Naive thymus-derived CD4-positive, alpha-beta T cell (primary cell): ENCODE measurements at regions of chr1 and their contacts with region 1.

Region 1: GRCh38 chr1:226940029-226940805 is at the start of gene COQ8A:
- DNase-seq: peak in 8 of 9 donors; percentile 99 to 100 (median 100)
- ATAC-seq: peak; percentile 95
- H3K4me3 ChIP-seq: peak within 1 kb of the TSS; percentile 84
- H3K4me3 Mint-ChIP-seq: peak within 1 kb of the TSS; percentile 85 to 94 (median 92)
- H3K27ac ChIP-seq: peak within 1 kb of the TSS; percentile 87
- H3K27ac Mint-ChIP-seq: peak within 1 kb of the TSS; percentile 94 to 98 (median 97)
- H3K4me1 ChIP-seq: peaks cover 15 to 34% of the 10 kb centered on the region in 2 donors
- H3K4me1 Mint-ChIP-seq: peaks cover 43 to 67% (median 50%) of the 10 kb centered on the region in 7 donors
- H3K27me3 ChIP-seq: no peaks in the 10 kb centered on the region
- H3K27me3 Mint-ChIP-seq: no peaks in the 10 kb centered on the region
- total RNA-seq, gene COQ8A: 34.1 to 83.4 (median 67.8) TPM

Region 2: DNA sequence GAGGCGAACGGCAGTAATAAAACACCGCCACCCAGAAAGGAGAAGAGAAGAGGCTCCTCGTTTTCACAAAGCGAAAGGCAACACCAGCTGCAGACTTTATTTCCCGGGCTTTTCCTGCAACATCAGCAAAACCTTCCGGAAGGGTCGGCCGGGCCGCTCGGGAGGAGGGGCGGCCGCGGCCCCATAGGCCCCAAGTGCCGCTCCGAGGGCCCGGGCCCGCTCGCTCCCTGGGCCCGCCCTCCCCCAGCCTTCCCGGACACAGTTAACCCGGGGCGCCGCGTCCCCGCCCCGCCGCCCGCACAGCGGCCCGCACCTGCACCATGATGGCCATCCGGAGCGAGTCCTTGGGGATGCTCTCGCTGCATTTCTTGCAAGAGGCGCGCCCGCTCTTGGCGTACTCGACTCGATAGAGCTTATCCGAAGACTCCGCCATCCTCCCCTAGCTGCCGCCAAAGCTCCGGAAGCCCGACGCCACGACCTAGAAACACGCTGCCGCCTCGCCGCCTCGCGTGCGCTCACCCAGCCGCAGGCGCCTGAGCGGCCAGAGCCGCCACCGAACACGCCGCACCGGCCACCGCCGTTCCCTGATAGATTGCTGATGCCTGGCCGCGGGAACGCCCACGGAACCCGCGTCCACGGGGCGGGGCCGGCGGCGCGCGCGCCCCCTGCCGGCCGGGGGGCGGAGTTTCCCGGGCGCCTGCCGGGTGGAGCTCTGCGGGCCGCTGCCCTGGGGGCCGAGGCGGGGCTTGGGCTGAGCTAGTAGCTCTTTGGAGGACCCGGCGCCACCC is 532.5 kb before region 1 on chr1 and contains the start of gene PARP1:
- CTCF ChIA-PET with region 1: no interaction called
- POLR2A ChIA-PET with region 1: interaction called, 3 read pairs
- intact Hi-C with region 1: loop called (anchors 2 to 5 kb)
- DNase-seq: peak; percentile 83 to 93 (median 89)
- ATAC-seq: peak; percentile 94
- H3K4me3 ChIP-seq: peak within 1 kb of the TSS; percentile 82
- H3K4me3 Mint-ChIP-seq: peak within 1 kb of the TSS; percentile 89 to 99 (median 94)
- H3K27ac ChIP-seq: peak within 1 kb of the TSS; percentile 74
- H3K27ac Mint-ChIP-seq: peak within 1 kb of the TSS; percentile 68 to 96 (median 93)
- H3K4me1 ChIP-seq: peaks cover 23 to 30% of the 10 kb centered on the region in 2 donors
- H3K4me1 Mint-ChIP-seq: peaks cover 37 to 46% (median 40%) of the 10 kb centered on the region in 7 donors
- H3K27me3 ChIP-seq: no peaks in the 10 kb centered on the region
- H3K27me3 Mint-ChIP-seq: peaks cover 0 to 3% (median 0%) of the 10 kb centered on the region in 5 donors
- total RNA-seq, gene PARP1: 63.6 to 165 (median 89.3) TPM

Region 3: DNA sequence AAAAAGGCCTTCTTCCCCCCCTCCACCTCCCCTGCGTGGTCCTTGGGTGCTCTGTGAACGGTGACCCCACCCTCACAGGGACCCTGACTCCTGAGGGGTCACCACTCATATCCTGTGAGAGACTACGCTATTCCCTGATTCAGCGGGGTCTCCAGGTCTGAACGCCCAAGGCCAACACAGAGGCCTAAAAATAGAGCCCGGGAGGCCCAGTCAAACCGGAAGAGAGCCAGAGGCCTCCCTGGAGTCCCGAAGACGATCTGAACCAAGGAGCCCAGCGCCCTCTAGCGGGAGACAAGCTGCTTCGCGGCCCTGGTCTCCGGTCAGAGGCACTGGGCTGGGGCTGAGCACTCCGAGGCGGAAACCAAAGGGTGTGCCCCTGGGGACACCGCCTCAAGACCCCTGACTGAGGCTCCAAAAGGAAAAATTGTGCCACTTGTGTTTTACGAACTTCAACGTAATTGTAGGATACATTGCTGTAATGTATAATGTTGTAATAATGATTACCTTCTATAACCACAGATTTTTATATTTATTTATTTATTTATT is 112.2 kb before region 1 on chr1:
- CTCF ChIA-PET with region 1: interaction called, 3 read pairs
- POLR2A ChIA-PET with region 1: interaction called, 3 read pairs
- intact Hi-C with region 1: loop called in 1 of 2 experiments (anchors 1 kb)
- DNase-seq: peak; percentile 82 to 94 (median 91)
- ATAC-seq: peak; percentile 99
- H3K4me3 ChIP-seq: peak overlapping the region; percentile 34
- H3K4me3 Mint-ChIP-seq: peak overlapping the region; percentile 35 to 79 (median 66)
- H3K27ac ChIP-seq: peak overlapping the region; percentile 59
- H3K27ac Mint-ChIP-seq: peak overlapping the region; percentile 80 to 95 (median 87)
- H3K4me1 ChIP-seq: peaks cover 9 to 11% of the 10 kb centered on the region in 2 donors
- H3K4me1 Mint-ChIP-seq: peaks cover 24 to 54% (median 45%) of the 10 kb centered on the region in 7 donors
- H3K27me3 ChIP-seq: no peaks in the 10 kb centered on the region
- H3K27me3 Mint-ChIP-seq: peaks cover 0 to 4% (median 0%) of the 10 kb centered on the region in 5 donors

Region 4: GRCh38 chr1:226912587-226913176 is 27.5 kb before region 1 on chr1:
- CTCF ChIA-PET with region 1: interaction called, 7 read pairs
- POLR2A ChIA-PET with region 1: interaction called, 8 read pairs
- intact Hi-C with region 1: loop called (anchors 1 to 2 kb)
- DNase-seq: peak in 7 of 9 donors; percentile 16 to 43 (median 29)
- ATAC-seq: peak; percentile 67
- H3K4me3 ChIP-seq: no peak overlapping the region
- H3K4me3 Mint-ChIP-seq: peak overlapping the region in 1 of 10 donors; percentile 10
- H3K27ac ChIP-seq: no peak overlapping the region
- H3K27ac Mint-ChIP-seq: peak overlapping the region in 2 of 9 donors; percentile 28 to 64
- H3K4me1 ChIP-seq: no peaks in the 10 kb centered on the region
- H3K4me1 Mint-ChIP-seq: peaks cover 0 to 18% (median 0%) of the 10 kb centered on the region in 7 donors
- H3K27me3 ChIP-seq: no peaks in the 10 kb centered on the region
- H3K27me3 Mint-ChIP-seq: no peaks in the 10 kb centered on the region

Region 5: GRCh38 chr1:227563324-227564201 is 623.3 kb after region 1 on chr1 and contains the start of gene ZNF678:
- CTCF ChIA-PET with region 1: no interaction called
- POLR2A ChIA-PET with region 1: no interaction called
- intact Hi-C with region 1: loop called in 1 of 2 experiments (anchors 1 kb)
- DNase-seq: peak; percentile 58 to 86 (median 84)
- ATAC-seq: peak; percentile 95
- H3K4me3 ChIP-seq: peak within 1 kb of the TSS; percentile 88
- H3K4me3 Mint-ChIP-seq: peak within 1 kb of the TSS; percentile 87 to 97 (median 94)
- H3K27ac ChIP-seq: peak within 1 kb of the TSS; percentile 82
- H3K27ac Mint-ChIP-seq: peak within 1 kb of the TSS; percentile 71 to 95 (median 91)
- H3K4me1 ChIP-seq: peaks cover 4 to 5% of the 10 kb centered on the region in 2 donors
- H3K4me1 Mint-ChIP-seq: peaks cover 17 to 57% (median 40%) of the 10 kb centered on the region in 7 donors
- H3K27me3 ChIP-seq: no peaks in the 10 kb centered on the region
- H3K27me3 Mint-ChIP-seq: peaks cover 22 to 27% (median 27%) of the 10 kb centered on the region in 5 donors
- total RNA-seq, gene ZNF678: 3.2 to 8.3 (median 7.4) TPM

Region 6: GRCh38 chr1:228082135-228082891 is 1142.1 kb after region 1 on chr1 and contains the start of gene ARF1:
- CTCF ChIA-PET with region 1: no interaction called
- POLR2A ChIA-PET with region 1: no interaction called
- intact Hi-C with region 1: loop called in 1 of 2 experiments (anchors 10 kb)
- DNase-seq: peak; percentile 89 to 99 (median 96)
- ATAC-seq: peak; percentile 97
- H3K4me3 ChIP-seq: peak within 1 kb of the TSS; percentile 88
- H3K4me3 Mint-ChIP-seq: peak within 1 kb of the TSS; percentile 89 to 97 (median 95)
- H3K27ac ChIP-seq: peak within 1 kb of the TSS; percentile 97
- H3K27ac Mint-ChIP-seq: peak within 1 kb of the TSS; percentile 76 to 97 (median 95)
- H3K4me1 ChIP-seq: peaks cover 41 to 43% of the 10 kb centered on the region in 2 donors
- H3K4me1 Mint-ChIP-seq: peaks cover 36 to 66% (median 52%) of the 10 kb centered on the region in 7 donors
- H3K27me3 ChIP-seq: no peaks in the 10 kb centered on the region
- H3K27me3 Mint-ChIP-seq: no peaks in the 10 kb centered on the region
- total RNA-seq, gene ARF1: 198 to 390 (median 259) TPM